IMR-90 (cell line): ENCODE measurements at regions of chr17 and their contacts with region 1.

Region 1: GRCh38 chr17:50139950-50140871 is 10.3 kb upstream of the SAMD14 start:
- DNase-seq: peak; percentile 73
- ATAC-seq: peak; percentile 98
- H3K4me3 ChIP-seq: no peak overlapping the region
- H3K27ac ChIP-seq: no peak overlapping the region
- H3K4me1 ChIP-seq: no peaks in the 10 kb centered on the region
- H3K27me3 ChIP-seq: no peaks in the 10 kb centered on the region
- CTCF ChIP-seq: peak; percentile 89
- POLR2A ChIP-seq: no peak
- RAD21 ChIP-seq: peak; percentile 82

Region 2: GRCh38 chr17:49959183-49959935 is 180.9 kb before region 1 on chr17:
- CTCF ChIA-PET with region 1: no interaction called
- POLR2A ChIA-PET with region 1: no interaction called
- dilution Hi-C with region 1: no loop called
- in situ Hi-C with region 1: no loop called
- intact Hi-C with region 1: no loop called
- DNase-seq: peak; percentile 4
- ATAC-seq: no peak
- H3K4me3 ChIP-seq: no peak overlapping the region
- H3K27ac ChIP-seq: no peak overlapping the region
- H3K4me1 ChIP-seq: no peaks in the 10 kb centered on the region
- H3K27me3 ChIP-seq: peaks cover 55% of the 10 kb centered on the region
- CTCF ChIP-seq: no peak
- POLR2A ChIP-seq: no peak
- RAD21 ChIP-seq: no peak

Region 3: GRCh38 chr17:50161023-50161910 is 21.1 kb after region 1 on chr17:
- CTCF ChIA-PET with region 1: interaction called, 3 read pairs
- POLR2A ChIA-PET with region 1: no interaction called
- dilution Hi-C with region 1: no loop called
- in situ Hi-C with region 1: no loop called
- intact Hi-C with region 1: loop called (anchors 1 kb)
- DNase-seq: peak; percentile 90
- ATAC-seq: peak; percentile 96
- H3K4me3 ChIP-seq: peak overlapping the region; percentile 61
- H3K27ac ChIP-seq: peak overlapping the region; percentile 46
- H3K4me1 ChIP-seq: peaks cover 5% of the 10 kb centered on the region; the same call in 1 of the 2 replicates
- H3K27me3 ChIP-seq: no peaks in the 10 kb centered on the region
- CTCF ChIP-seq: peak; percentile 97
- POLR2A ChIP-seq: peak; percentile 58
- RAD21 ChIP-seq: peak; percentile 72